Heart right ventricle (tissue), 16 donors: ENCODE measurements at regions of chr7 and their contacts with region 1.

Region 1: GRCh38 chr7:139687980-139688632 is 89.7 kb downstream of the HIPK2 start:
- DNase-seq: no peak
- ATAC-seq: peak in 4 of 8 donors; percentile 22 to 48 (median 30)
- H3K4me3 ChIP-seq: no peak overlapping the region
- H3K27ac ChIP-seq: peak overlapping the region in 2 of 10 donors; percentile 6 to 57
- H3K4me1 ChIP-seq: peaks cover 7 to 74% (median 49%) of the 10 kb centered on the region in 9 donors
- H3K27me3 ChIP-seq: no peaks in the 10 kb centered on the region
- CTCF ChIP-seq: no peak

Region 2: GRCh38 chr7:139667377-139667776 is 20.7 kb before region 1 on chr7:
- intact Hi-C with region 1: loop called in 1 of 10 experiments (anchors 1 kb)
- DNase-seq: no peak
- ATAC-seq: no peak
- H3K4me3 ChIP-seq: no peak overlapping the region
- H3K27ac ChIP-seq: no peak overlapping the region
- H3K4me1 ChIP-seq: peaks cover 4 to 41% (median 25%) of the 10 kb centered on the region in 9 donors
- H3K27me3 ChIP-seq: no peaks in the 10 kb centered on the region
- CTCF ChIP-seq: no peak

Region 3: GRCh38 chr7:140242057-140243031 is 554.2 kb after region 1 on chr7:
- intact Hi-C with region 1: no loop called
- DNase-seq: no peak
- ATAC-seq: peak; percentile 28 to 67 (median 58)
- H3K4me3 ChIP-seq: no peak overlapping the region
- H3K27ac ChIP-seq: peak overlapping the region in 2 of 10 donors; percentile 42 to 46
- H3K4me1 ChIP-seq: peaks cover 0 to 22% (median 8%) of the 10 kb centered on the region in 9 donors
- H3K27me3 ChIP-seq: no peaks in the 10 kb centered on the region
- CTCF ChIP-seq: no peak